ENCODE measurements at regions of chr9 and their contacts with region 1.

Region 1: DNA sequence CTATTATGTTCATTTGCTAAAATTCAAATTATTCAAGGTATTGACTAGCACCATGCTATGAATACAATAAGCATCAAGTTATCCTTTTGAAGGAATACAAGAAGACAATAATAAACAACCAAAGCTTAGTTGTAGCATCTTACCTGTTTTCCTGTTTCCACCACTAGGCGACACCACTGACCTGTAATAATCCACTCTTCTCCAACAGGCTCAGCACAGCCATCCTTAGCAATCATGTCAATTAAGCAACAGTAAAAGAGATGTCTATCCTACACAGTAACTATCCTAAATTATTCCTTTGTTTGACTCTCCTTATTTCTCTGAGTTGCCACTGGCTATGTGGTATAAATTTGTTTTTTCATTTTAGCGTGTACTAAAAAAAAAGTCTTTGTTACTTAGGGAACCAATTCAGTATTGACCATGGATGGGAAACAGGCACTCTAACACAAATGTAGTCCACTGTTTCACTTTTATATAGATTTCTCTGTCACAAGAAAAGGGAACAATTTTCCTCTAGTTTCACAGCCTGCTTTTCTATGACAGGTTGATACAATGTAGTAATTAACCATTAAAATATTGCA is 46.2 kb downstream of the PCA3 start:
- DNase-seq: peak; percentile 65
- H3K4me3 ChIP-seq: no peak overlapping the region
- CTCF ChIP-seq: peak; percentile 83

Region 2: DNA sequence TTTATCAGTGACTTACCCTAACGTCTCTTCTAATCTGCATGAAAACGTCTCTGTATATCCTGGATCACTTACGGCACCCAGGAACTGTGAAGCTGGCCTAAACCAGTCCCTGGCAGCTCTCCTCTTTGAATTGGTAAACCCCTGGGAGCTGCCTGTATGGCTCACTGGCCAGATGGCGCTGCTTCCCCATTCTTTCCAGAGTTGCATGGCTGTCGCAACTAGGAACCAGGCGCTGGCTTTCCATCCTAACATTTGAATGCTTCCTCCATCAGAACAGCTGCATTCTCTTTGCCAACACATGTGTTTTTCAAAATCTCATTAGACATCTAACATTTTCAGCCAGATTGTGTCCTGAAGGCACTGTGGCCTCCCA is 54.2 kb before region 1 on chr9:
- in situ Hi-C with region 1: no loop called
- DNase-seq: no peak
- H3K4me3 ChIP-seq: no peak overlapping the region
- CTCF ChIP-seq: peak; percentile 42

Region 3: DNA sequence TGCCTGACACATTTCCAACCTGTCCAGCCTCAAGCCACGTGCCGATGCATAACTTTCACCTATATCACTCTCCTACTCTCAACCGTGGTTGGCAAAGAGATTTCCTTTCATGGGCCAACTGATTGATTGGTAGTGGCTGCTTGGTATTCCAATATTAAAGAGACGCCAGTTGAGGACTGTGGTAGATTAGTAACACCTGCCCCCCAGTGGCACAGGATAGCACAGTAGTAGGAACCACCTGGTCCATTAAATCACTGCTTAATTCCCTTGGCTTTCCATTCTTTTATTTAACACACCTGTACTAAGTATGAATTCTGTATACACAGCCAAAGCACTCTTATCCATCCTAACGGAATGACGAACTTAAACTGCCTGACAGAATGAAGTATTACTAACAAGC is 189.9 kb after region 1 on chr9:
- in situ Hi-C with region 1: loop called (anchors 5 kb)
- DNase-seq: no peak
- H3K4me3 ChIP-seq: no peak overlapping the region
- CTCF ChIP-seq: no peak

Measured in astrocyte of the cerebellum (primary cell).